Astrocyte of the cerebellum (primary cell): ENCODE measurements at regions of chr5 and their contacts with region 1.

Region 1: DNA sequence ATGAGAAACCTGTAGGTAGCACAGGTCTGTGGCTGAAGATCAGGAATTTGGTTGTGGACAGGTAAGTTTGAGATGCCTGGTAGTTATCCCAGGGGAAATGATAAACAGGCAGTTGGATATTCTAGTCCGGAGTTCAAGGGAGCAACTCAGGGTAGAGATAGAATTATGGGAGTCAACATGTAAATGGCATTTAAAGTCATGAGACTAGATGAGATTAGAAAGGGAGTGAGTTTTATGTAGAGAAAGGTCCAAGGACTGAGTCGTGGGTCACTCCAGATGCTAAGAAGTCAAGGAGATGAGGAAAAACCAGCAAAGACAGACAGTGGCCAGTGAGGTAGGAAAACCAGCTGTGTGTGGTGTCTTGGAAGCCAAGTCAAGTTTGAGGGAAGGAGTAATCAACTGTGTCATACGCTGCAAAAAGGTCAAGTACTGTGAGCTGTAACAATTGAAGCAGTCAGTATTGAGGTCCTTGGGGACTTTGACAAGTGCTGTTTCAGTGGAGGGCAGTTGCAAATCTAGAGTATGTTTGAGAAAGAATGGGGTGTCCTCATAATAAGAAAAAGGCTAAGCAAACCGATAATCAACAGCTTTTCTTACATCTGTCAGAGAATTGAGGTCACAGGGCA is 18.2 kb downstream of the GNPDA1 start:
- DNase-seq: no peak
- H3K4me3 ChIP-seq: no peak overlapping the region
- CTCF ChIP-seq: no peak

Region 2: DNA sequence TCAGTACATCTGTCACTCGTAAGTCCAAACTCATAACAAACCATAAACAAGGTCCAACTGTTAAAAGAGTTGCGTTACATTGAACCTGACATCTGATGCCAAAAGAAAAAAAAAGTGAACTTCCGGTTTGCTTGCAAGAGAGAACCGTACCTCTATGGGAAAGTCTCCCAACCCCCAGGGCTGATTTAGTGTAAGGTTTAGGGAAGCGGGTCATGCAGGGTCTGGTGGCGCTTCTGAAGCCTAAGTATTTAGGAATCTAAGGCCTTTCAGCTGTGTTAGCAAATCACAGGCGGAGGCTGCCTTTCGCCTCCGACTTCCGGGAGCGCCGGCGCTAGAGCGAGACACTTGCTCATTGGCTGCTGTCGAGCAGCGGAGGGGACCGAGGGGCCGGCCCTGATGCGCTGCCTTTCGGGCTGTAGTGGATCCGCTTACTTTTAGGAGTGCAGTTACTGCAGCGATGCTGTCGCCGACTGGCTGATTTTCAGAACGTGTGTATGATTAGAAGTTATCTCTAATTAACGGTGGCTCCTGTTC is 30.2 kb after region 1 on chr5:
- in situ Hi-C with region 1: no loop called
- DNase-seq: no peak
- H3K4me3 ChIP-seq: peak overlapping the region; percentile 36
- CTCF ChIP-seq: no peak

Region 3: GRCh38 chr5:142079306-142079721 is 84.7 kb after region 1 on chr5:
- in situ Hi-C with region 1: no loop called
- DNase-seq: no peak
- H3K4me3 ChIP-seq: no peak overlapping the region
- CTCF ChIP-seq: no peak

Region 4: GRCh38 chr5:142145106-142145900 is 150.7 kb after region 1 on chr5:
- in situ Hi-C with region 1: loop called (anchors 5 kb)
- DNase-seq: peak; percentile 50
- H3K4me3 ChIP-seq: no peak overlapping the region
- CTCF ChIP-seq: peak; percentile 88